Activated naive CD4-positive, alpha-beta T cell treated with anti-CD3 and anti-CD28 coated beads, Interleukin-2, amount 10 ng/mL, durations not matched to agents 7 days and 5 days (primary cell): ENCODE measurements at regions of chr20 and their contacts with region 1.

Region 1: DNA sequence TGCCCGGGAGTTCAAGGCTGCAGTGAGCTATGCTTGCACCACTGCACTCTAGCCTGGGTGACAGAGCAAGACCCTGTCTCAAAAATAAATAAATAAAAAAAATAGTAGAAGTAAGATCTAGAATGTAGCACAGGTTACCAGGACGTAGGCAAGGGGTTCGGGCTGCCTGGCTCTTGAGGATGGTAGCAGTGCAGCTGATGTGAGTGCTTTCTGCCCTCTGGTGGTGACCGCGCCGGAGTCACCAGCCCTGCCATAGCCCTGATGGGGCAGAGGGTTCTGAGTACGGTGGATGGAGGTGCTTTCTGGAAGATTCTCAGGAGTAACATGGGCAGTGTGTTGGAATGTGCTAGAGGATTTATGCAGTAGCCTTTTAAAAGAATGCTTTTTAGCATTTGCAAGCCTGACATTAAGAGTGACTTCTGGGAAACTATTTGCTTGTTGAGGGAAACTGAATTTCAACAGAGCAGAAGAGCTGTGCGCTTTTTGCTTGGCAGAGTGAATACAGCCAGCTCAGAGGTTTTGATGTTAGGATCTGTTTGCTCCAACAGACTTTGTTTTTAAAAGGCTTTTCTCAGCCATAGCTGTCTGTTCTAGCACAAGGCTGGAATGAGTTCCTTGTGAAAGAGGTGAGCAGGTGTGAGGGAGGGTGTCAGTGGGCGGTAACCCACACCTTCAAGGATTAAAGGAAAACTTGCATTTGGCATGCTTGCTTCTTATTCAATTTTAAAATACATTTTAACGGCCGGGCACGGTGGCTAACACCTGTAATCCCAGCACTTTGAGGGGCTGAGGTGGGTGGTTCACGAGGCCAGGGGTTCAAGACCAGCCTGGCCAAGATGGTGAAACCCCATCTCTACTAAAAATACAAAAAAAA is 65.9 kb downstream of the PTPN1 start:
- DNase-seq: peak; percentile 78
- H3K4me3 Mint-ChIP-seq: no peak overlapping the region
- H3K27ac Mint-ChIP-seq: peak overlapping the region; percentile 26
- H3K4me1 Mint-ChIP-seq: peaks cover 31% of the 10 kb centered on the region
- H3K27me3 Mint-ChIP-seq: no peaks in the 10 kb centered on the region

Region 2: DNA sequence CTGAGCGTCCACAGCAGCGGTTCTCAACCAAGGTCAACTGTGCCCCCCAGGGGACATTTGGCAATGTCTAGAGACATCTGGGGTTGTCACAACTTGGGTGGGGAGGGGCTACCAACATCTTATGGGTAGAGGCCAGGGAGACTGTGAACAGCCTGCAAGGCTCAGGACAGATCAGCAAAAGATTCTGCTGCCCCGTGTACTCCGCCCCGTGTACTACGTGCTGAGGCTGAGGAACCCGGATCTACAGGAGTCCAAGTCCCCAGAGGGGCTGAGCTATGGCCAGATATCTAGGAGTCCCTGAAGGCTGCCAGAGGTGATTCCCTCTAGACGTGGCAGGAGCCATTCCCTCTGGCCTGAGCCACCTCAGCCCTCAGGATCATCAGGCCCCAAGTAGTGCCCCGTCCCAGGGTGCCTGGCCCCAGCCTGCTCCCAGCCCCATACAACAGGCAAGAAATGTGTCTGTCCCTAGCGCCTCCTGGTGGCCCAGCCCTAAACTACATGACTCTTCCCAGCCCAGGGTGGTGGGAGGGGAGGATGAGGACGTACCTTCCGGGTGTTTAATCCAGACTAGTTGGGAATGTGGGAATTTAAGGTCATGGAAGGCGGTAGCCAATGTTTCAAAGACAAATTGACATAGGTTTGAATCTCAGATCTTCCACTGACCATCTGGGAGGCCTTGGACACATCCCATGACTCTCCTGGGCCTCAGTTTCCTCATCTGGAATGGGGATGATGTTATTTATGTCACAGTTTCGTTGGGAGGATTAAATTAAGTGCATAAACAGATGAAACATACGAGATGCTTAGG is 115.4 kb before region 1 on chr20:
- CTCF ChIA-PET with region 1: interaction called, 18 read pairs
- DNase-seq: peak; percentile 88
- H3K4me3 Mint-ChIP-seq: no peak overlapping the region
- H3K27ac Mint-ChIP-seq: no peak overlapping the region
- H3K4me1 Mint-ChIP-seq: peaks cover 22% of the 10 kb centered on the region
- H3K27me3 Mint-ChIP-seq: peaks cover 42% of the 10 kb centered on the region

Region 3: DNA sequence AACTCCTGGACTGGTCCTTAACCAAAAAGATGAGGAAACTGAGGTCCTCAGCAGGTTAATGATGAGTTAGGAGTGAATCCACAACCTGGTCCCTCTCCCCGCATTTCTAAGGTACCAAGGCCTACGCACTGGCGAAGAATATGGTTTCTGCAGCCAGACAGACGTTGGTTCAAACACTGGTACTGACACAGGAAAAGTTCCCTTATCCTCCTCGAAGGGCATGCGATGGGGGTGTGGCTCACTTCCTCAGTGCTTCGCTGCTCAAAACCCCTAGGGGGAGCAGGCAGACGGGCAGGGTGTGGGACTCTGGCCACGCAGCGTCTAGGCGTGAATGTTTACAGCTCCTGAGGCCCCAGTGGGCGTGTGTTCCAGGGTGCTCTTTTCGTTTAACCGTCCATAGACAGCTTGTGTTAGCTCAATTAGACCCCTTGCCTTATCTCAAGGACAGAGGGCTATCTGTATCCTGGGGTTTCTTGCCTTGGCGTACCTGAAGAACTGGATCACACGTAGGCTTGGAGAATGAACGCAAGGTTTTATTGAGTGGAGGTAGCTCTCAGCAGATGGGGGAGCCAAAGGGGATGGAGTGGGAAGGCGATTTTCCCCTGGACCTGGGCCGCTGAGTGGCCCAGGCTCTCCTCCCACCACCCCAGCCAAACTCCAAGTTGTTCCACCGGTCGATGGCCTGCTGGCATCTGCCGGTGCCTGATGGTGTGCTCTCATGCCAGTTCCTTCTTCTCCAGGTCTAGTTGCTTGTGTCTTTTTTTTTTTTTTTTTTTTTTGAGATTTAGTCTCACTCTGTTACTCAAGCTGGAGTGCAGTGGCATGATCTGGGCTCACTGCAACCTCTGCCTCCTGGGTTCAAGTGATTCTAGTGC is 97.7 kb before region 1 on chr20:
- CTCF ChIA-PET with region 1: interaction called, 236 read pairs
- DNase-seq: peak; percentile 86
- H3K4me3 Mint-ChIP-seq: no peak overlapping the region
- H3K27ac Mint-ChIP-seq: no peak overlapping the region
- H3K4me1 Mint-ChIP-seq: peaks cover 51% of the 10 kb centered on the region
- H3K27me3 Mint-ChIP-seq: peaks cover 2% of the 10 kb centered on the region

Region 4: DNA sequence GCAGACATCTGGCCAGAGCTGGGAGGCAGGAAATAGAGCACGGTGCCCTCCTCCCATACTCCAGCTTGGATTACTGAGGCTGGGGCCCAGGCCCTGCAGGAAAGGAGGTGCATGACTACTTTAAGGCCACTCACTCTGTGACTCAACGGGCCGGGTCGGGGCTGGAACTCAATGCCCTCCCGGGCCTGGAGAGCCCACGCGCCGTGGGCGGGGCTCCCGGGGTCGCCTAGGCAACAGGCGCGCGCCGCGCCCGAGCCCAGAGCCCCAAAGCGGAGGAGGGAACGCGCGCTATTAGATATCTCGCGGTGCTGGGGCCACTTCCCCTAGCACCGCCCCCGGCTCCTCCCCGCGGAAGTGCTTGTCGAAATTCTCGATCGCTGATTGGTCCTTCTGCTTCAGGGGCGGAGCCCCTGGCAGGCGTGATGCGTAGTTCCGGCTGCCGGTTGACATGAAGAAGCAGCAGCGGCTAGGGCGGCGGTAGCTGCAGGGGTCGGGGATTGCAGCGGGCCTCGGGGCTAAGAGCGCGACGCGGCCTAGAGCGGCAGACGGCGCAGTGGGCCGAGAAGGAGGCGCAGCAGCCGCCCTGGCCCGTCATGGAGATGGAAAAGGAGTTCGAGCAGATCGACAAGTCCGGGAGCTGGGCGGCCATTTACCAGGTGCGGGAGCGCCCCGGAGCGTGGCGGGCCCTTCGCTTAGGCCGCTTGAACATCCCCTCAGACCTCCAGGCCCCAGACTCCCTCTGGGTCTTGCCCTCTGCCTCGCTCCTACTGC is 66.0 kb before region 1 on chr20 and contains the start of gene PTPN1:
- CTCF ChIA-PET with region 1: interaction called, 19 read pairs
- DNase-seq: peak; percentile 99
- H3K4me3 Mint-ChIP-seq: peak within 1 kb of the TSS; percentile 94
- H3K27ac Mint-ChIP-seq: peak within 1 kb of the TSS; percentile 92
- H3K4me1 Mint-ChIP-seq: peaks cover 45% of the 10 kb centered on the region
- H3K27me3 Mint-ChIP-seq: no peaks in the 10 kb centered on the region

Region 5: GRCh38 chr20:50588034-50588611 is 12.0 kb after region 1 on chr20:
- CTCF ChIA-PET with region 1: interaction called, 24 read pairs
- DNase-seq: peak; percentile 79
- H3K4me3 Mint-ChIP-seq: no peak overlapping the region
- H3K27ac Mint-ChIP-seq: peak overlapping the region; percentile 70
- H3K4me1 Mint-ChIP-seq: no peaks in the 10 kb centered on the region
- H3K27me3 Mint-ChIP-seq: no peaks in the 10 kb centered on the region